Mammary epithelial cell (primary cell): ENCODE measurements at regions of chr2 and their contacts with region 1.

Region 1: GRCh38 chr2:153068915-153069691 is 350.7 kb downstream of the ARL6IP6 start:
- DNase-seq: peak; percentile 40
- H3K4me3 ChIP-seq: no peak overlapping the region
- H3K27ac ChIP-seq: no peak overlapping the region
- H3K4me1 ChIP-seq: no peaks in the 10 kb centered on the region
- H3K27me3 ChIP-seq: no peaks in the 10 kb centered on the region
- CTCF ChIP-seq: no peak

Region 2: GRCh38 chr2:152781175-152781574 is 287.9 kb before region 1 on chr2:
- CTCF ChIA-PET with region 1: no interaction called
- dilution Hi-C with region 1: loop called (anchors 5 kb)
- in situ Hi-C with region 1: no loop called
- intact Hi-C with region 1: no loop called
- DNase-seq: no peak
- H3K4me3 ChIP-seq: no peak overlapping the region
- H3K27ac ChIP-seq: no peak overlapping the region
- H3K4me1 ChIP-seq: no peaks in the 10 kb centered on the region
- H3K27me3 ChIP-seq: no peaks in the 10 kb centered on the region
- CTCF ChIP-seq: no peak

Region 3: DNA sequence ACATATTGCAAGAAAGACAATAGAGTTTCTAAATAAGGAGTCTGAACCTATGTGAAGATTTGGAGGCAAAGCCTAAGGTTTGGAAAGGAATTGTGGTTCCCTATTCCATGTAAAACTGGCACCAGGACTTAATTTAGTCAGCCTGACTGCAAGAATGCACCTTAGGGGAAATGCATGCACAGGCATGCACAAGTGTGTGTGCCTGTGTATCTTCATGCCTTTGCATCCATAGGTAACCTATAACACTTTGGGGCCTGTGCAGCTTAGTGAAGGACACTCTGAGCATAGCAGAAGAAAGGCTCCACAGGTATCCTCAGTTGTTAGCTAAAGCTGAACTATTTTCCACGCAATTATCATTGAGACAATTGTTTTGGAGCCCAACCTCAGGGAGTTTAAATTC is 336.1 kb after region 1 on chr2:
- CTCF ChIA-PET with region 1: no interaction called
- dilution Hi-C with region 1: no loop called
- in situ Hi-C with region 1: no loop called
- intact Hi-C with region 1: no loop called
- DNase-seq: peak; percentile 78
- H3K4me3 ChIP-seq: no peak overlapping the region
- H3K27ac ChIP-seq: no peak overlapping the region
- H3K4me1 ChIP-seq: peaks cover 24% of the 10 kb centered on the region
- H3K27me3 ChIP-seq: no peaks in the 10 kb centered on the region
- CTCF ChIP-seq: no peak